Right ventricle myocardium inferior (tissue), 1 donor: ENCODE measurements at regions of chr4 and their contacts with region 1.

Region 1: DNA sequence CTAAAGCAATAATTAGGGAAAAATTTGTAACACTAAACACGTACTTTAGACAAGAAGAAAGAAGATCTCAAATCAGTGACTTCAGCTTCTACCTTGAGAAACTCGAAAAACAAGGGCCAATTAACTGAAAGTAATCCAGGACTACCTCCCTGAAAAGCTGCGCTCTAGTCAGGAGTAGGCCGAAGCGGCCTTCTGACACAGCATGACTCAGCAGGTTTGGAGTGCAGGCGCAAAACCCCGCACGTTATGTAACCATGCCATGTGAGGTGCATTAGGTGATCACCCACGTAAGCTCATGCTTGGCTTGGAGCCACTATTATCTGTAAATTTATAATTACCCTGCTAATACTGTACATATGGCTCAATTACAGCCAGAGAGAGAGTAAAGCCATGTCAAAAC is 52.8 kb upstream of the CCDC149 start:
- DNase-seq: no peak
- ATAC-seq: no peak

Region 2: GRCh38 chr4:24856586-24856985 is 109.0 kb before region 1 on chr4:
- intact Hi-C with region 1: loop called (anchors 10 kb)
- DNase-seq: peak; percentile 65
- ATAC-seq: no peak

Region 3: GRCh38 chr4:24924309-24924781 is 41.3 kb before region 1 on chr4:
- intact Hi-C with region 1: no loop called
- DNase-seq: no peak
- ATAC-seq: no peak